ENCODE measurements at regions of chr2 and their contacts with region 1.

Region 1: GRCh38 chr2:159053161-159054031 is 85.0 kb downstream of the TANC1 start:
- DNase-seq: peak; percentile 44
- H3K4me3 ChIP-seq: no peak overlapping the region
- H3K27ac ChIP-seq: peak overlapping the region; percentile 94 to 99
- H3K4me1 ChIP-seq: peaks cover 0 to 76% of the 10 kb centered on the region in 2 experiments; a peak in 2 of 4 replicates
- H3K27me3 ChIP-seq: no peaks in the 10 kb centered on the region
- CTCF ChIP-seq: no peak
- EP300 ChIP-seq: peak; percentile 43 to 90; a peak in 3 of 4 replicates
- RAD21 ChIP-seq: peak; percentile 22; the same call in 1 of the 2 replicates

Region 2: GRCh38 chr2:158943973-158944372 is 109.4 kb before region 1 on chr2:
- CTCF ChIA-PET with region 1: no interaction called
- POLR2A ChIA-PET with region 1: no interaction called
- DNase-seq: no peak
- H3K4me3 ChIP-seq: no peak overlapping the region
- H3K27ac ChIP-seq: no peak overlapping the region
- H3K4me1 ChIP-seq: no peaks in the 10 kb centered on the region
- H3K27me3 ChIP-seq: no peaks in the 10 kb centered on the region
- CTCF ChIP-seq: no peak
- EP300 ChIP-seq: no peak
- RAD21 ChIP-seq: no peak

Region 3: GRCh38 chr2:158968396-158969161 is 84.8 kb before region 1 on chr2 and contains the start of gene TANC1:
- CTCF ChIA-PET with region 1: interaction called, 20 read pairs
- POLR2A ChIA-PET with region 1: interaction called, 8 read pairs
- DNase-seq: peak; percentile 95
- H3K4me3 ChIP-seq: peak within 1 kb of the TSS; percentile 85 to 96
- H3K27ac ChIP-seq: peak within 1 kb of the TSS; percentile 97 to 99
- H3K4me1 ChIP-seq: peaks cover 11 to 49% of the 10 kb centered on the region in 2 experiments; a peak in 2 of 4 replicates
- H3K27me3 ChIP-seq: no peaks in the 10 kb centered on the region
- CTCF ChIP-seq: no peak; the same call in 1 of the 2 replicates
- EP300 ChIP-seq: peak in 1 of 2 experiments; percentile 13; a peak in 1 of 4 replicates
- RAD21 ChIP-seq: no peak; the same call in 1 of the 2 replicates
- polyA plus RNA-seq, gene TANC1: 19.2 and 23.8 TPM in 2 replicates

Region 4: GRCh38 chr2:159071190-159071915 is 18.0 kb after region 1 on chr2:
- CTCF ChIA-PET with region 1: interaction called, 10 read pairs
- POLR2A ChIA-PET with region 1: interaction called, 5 read pairs
- DNase-seq: no peak
- H3K4me3 ChIP-seq: no peak overlapping the region; a peak in 1 of 4 replicates
- H3K27ac ChIP-seq: peak overlapping the region in 1 of 2 experiments; percentile 86; a peak in 3 of 4 replicates
- H3K4me1 ChIP-seq: peaks cover 2 to 38% of the 10 kb centered on the region in 2 experiments; a peak in 3 of 4 replicates
- H3K27me3 ChIP-seq: no peaks in the 10 kb centered on the region
- CTCF ChIP-seq: peak; percentile 36; the same call in 1 of the 2 replicates
- EP300 ChIP-seq: no peak
- RAD21 ChIP-seq: no peak

Region 5: GRCh38 chr2:159094173-159094737 is 40.9 kb after region 1 on chr2:
- CTCF ChIA-PET with region 1: no interaction called
- POLR2A ChIA-PET with region 1: no interaction called
- DNase-seq: no peak
- H3K4me3 ChIP-seq: no peak overlapping the region
- H3K27ac ChIP-seq: peak overlapping the region in 1 of 2 experiments; percentile 4; a peak in 1 of 4 replicates
- H3K4me1 ChIP-seq: peaks cover 20 to 33% of the 10 kb centered on the region in 2 experiments
- H3K27me3 ChIP-seq: no peaks in the 10 kb centered on the region
- CTCF ChIP-seq: no peak
- EP300 ChIP-seq: no peak
- RAD21 ChIP-seq: no peak

Measured in SK-N-SH (cell line).